Mucosa of descending colon (tissue), 3 donors: ENCODE measurements at regions of chr9 and their contacts with region 1.

Region 1: DNA sequence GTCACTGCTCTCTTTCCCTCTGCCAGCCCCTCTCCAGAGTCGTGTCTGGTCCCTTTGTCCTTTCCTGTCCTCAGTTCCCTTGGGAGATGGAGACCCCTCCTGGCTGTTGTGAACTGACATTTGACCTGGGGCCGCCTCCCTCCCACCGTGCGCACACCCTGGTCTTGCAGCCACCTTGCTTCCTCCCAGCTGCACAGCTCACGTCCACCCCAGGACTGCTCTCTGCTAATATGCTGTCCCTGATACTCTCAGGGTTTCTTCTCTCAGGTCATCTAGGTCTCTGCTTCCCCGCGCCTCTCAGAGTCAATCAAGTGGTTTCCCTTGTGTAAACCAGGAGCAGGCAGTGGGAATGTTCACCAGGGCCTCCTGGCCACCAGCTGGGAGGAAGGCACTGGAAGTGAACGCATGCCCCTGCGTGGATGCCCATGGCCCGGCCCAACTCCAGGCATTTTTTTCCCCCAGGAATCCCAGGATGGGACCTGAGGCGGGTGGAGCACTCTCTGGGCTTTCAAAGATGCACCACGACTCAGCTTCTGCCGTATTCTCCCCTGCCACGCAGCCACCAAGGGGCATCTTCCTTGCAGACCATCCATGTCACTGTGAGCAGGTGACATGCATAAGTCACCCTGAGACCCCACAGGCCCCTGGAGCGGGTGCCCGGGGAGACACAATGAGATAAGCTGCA is 142.4 kb downstream of the OLFM1 start:
- DNase-seq: peak in 1 of 3 donors; percentile 16
- ATAC-seq: no peak
- H3K4me3 ChIP-seq: no peak overlapping the region
- H3K4me1 ChIP-seq: no peaks in the 10 kb centered on the region
- CTCF ChIP-seq: no peak

Region 2: GRCh38 chr9:134968011-134968822 is 261.6 kb before region 1 on chr9:
- intact Hi-C with region 1: no loop called
- DNase-seq: peak in 1 of 3 donors; percentile 25
- ATAC-seq: no peak
- H3K4me3 ChIP-seq: no peak overlapping the region
- H3K4me1 ChIP-seq: no peaks in the 10 kb centered on the region
- CTCF ChIP-seq: no peak

Region 3: DNA sequence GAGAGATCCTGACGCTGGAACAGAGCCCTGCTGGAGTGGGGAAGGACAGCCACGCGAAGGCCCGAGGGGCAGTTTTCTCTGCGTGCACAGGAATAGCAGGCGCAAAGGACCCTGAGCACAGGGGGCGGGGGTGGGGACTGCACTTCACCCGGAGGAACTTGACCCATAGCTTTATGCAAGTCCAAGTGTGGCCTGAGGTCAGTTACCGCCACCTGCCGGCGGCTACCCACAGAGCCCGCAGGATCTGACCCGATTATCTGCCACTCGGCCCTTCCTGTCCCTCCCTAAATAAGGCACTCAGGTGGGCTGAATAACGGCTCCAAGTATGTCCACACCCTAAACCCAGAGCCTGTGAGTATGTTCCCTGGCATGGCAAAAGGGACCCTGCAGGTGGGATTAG is 246.8 kb before region 1 on chr9:
- intact Hi-C with region 1: no loop called
- DNase-seq: peak in 2 of 3 donors; percentile 28 to 43
- ATAC-seq: no peak
- H3K4me3 ChIP-seq: no peak overlapping the region
- H3K4me1 ChIP-seq: no peaks in the 10 kb centered on the region
- CTCF ChIP-seq: no peak

Region 4: DNA sequence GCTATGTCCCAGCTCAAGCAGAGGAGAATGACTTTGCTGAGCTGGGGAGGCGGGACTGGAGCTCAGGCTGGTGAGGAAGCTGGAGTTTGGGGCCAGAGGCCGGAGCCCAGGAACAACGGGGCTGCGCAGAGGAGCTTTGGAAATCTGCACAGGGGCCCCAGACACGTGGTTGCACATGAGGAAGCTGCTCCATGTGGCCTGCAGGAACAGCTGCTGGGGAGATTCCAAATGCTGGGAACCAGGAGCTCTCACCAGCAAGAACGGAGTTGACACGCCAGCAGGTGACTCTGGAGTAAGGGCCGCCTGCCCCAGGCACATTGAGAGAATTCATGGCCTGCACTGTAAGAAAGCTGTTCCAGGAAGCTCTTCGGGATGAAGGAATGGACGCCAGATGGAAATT is 51.3 kb before region 1 on chr9:
- intact Hi-C with region 1: loop called in 1 of 2 experiments (anchors 10 kb)
- DNase-seq: no peak
- ATAC-seq: no peak
- H3K4me3 ChIP-seq: no peak overlapping the region
- H3K4me1 ChIP-seq: no peaks in the 10 kb centered on the region
- CTCF ChIP-seq: no peak

Region 5: GRCh38 chr9:135275571-135276289 is 45.9 kb after region 1 on chr9:
- intact Hi-C with region 1: no loop called
- DNase-seq: no peak
- ATAC-seq: no peak
- H3K4me3 ChIP-seq: no peak overlapping the region
- H3K4me1 ChIP-seq: no peaks in the 10 kb centered on the region
- CTCF ChIP-seq: no peak